GM13977 (cell line): ENCODE measurements at regions of chr7 and their contacts with region 1.

Region 1: GRCh38 chr7:81469869-81470723 is 299.8 kb downstream of the HGF start:
- DNase-seq: peak; percentile 9
- CTCF ChIP-seq: peak; percentile 74

Region 2: DNA sequence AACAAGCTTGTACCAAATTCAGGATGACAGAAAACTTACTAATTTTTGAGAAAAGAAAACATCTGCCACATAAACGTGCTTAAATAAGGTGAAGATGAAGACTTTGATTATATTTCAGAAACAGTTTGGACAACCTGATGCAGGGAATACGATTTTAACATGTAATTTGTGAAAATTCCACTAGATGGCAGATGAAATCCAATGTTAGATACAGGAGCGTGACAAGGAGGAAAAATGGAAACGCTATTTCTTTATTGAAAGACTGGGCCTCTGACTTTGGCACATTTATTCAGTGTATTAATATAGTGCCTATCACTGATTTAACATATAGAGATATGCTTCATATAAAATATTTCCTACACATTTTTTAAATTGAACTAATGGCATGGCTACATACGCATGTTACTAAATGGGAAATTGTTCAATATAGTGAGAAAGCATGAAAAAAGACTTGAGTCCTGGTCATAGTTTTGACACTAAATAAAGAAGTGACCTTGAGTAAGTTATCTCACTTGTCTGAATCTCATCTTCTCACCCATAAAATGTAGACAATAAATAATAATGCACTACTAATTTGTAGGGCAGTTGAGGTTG is 771.0 kb before region 1 on chr7:
- in situ Hi-C with region 1: loop called (anchors 25 kb)
- DNase-seq: peak; percentile 13
- CTCF ChIP-seq: peak; percentile 58

Region 3: DNA sequence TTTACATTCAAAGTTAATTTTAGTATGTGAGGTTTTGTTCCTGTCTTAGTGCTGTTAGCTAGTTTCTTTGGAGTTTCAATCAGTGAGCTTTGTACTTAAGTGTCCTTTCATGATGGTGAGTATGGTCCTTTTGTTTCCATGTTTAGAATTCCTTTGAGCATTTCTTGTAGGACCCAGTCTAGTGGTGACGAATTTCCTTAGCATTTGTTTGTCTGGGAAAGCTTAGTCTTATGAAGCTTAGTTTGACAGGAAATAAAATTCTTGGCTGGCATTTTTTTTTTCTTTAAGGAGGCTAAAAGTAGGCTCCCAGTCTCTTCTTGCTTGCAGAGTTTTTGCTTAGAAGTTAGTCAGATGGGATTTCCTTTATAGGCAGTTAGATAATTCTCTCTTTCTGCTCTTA is 342.1 kb before region 1 on chr7:
- in situ Hi-C with region 1: no loop called
- DNase-seq: no peak
- CTCF ChIP-seq: no peak